Dendritic cell treated with granulocyte-macrophage colony-stimulating factor and Interleukin-4, amounts not matched to agents 40 ng/mL and 50 ng/mL, for 4 days (primary cell): ENCODE measurements at regions of chr7 and their contacts with region 1.

Region 1: GRCh38 chr7:92833024-92833765 is 3.2 kb downstream of the CDK6 start:
- H3K4me3 Mint-ChIP-seq: peak overlapping the region; percentile 92
- H3K27ac Mint-ChIP-seq: peak overlapping the region; percentile 84
- H3K4me1 Mint-ChIP-seq: peaks cover 34% of the 10 kb centered on the region
- H3K27me3 Mint-ChIP-seq: peaks cover 6% of the 10 kb centered on the region

Region 2: DNA sequence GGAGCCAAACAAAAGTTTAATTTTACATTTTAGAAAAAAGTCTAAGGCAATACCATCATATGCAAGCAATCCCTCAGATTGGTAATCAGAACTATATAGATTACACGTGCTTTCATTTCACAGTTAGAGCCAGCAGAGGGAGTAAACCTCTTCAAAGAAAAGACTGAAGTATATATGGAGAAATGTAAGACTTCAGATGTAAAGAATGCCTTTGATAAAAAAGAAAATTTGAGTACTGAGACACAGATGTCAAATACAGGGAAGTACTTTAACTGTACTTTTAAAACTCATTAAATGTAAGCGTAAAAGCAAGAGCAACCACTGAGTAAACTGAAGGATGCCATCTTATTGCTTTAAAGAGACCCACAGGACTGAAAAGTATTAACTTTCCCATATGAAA is 141.6 kb before region 1 on chr7:
- intact Hi-C with region 1: loop called (anchors 1 kb)
- H3K4me3 Mint-ChIP-seq: no peak overlapping the region
- H3K27ac Mint-ChIP-seq: no peak overlapping the region
- H3K4me1 Mint-ChIP-seq: peaks cover 13% of the 10 kb centered on the region
- H3K27me3 Mint-ChIP-seq: no peaks in the 10 kb centered on the region

Region 3: DNA sequence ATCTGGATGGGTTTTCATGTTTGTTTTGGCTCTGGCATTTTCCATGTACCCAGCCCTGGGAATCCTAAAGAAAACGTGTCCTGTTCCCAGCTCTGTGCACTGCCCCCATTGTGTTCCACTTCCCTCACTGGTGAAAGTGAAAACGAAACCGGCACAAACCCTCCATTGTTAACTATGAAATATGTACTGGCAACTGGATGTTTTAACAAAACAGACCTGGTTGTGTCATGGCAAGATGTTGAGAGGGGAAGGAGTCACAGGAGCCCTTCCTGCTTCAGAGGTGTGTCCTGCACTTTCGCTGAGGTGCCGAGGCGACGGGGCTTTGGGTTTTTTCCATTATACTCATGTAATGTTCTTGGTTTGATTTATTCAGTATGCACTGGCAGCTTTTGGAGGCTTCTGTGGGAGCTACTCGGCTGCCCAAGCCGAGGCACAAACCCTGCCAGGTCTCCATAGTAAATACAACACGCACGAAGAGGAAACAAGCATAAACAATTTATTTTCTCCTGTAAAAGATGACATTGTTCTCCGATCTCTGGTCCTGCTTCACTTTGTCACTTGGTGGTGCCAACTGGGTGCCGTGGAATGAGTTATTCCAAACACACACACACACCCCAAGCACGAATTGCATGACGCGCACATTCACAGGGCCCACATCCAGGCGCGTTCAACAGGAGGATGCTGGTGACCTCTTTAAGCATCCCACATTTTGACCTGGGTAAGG is 115.0 kb before region 1 on chr7:
- intact Hi-C with region 1: loop called (anchors 2 kb)
- H3K4me3 Mint-ChIP-seq: peak overlapping the region; percentile 83
- H3K27ac Mint-ChIP-seq: peak overlapping the region; percentile 96
- H3K4me1 Mint-ChIP-seq: peaks cover 22% of the 10 kb centered on the region
- H3K27me3 Mint-ChIP-seq: no peaks in the 10 kb centered on the region

Region 4: DNA sequence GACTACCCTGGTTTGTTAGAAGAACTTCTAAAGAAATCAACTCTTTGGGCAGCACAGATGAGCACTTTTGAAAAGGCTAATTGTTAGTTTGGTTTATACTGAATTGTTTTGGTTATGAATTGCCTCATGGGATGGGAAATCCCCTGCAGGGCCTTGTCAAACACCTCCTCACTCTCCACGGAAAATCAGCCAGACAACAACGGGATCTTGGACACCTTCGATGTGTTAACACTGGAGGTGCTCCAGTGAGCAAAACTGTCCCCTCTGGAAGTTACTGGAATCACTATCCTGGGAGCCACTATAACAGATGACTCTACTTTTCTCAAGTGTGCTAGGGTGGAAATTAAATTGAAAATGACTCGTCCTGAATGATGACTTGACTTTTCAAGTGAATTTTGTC is 35.5 kb before region 1 on chr7:
- intact Hi-C with region 1: loop called (anchors 5 kb)
- H3K4me3 Mint-ChIP-seq: no peak overlapping the region
- H3K27ac Mint-ChIP-seq: no peak overlapping the region
- H3K4me1 Mint-ChIP-seq: peaks cover 14% of the 10 kb centered on the region
- H3K27me3 Mint-ChIP-seq: no peaks in the 10 kb centered on the region

Region 5: DNA sequence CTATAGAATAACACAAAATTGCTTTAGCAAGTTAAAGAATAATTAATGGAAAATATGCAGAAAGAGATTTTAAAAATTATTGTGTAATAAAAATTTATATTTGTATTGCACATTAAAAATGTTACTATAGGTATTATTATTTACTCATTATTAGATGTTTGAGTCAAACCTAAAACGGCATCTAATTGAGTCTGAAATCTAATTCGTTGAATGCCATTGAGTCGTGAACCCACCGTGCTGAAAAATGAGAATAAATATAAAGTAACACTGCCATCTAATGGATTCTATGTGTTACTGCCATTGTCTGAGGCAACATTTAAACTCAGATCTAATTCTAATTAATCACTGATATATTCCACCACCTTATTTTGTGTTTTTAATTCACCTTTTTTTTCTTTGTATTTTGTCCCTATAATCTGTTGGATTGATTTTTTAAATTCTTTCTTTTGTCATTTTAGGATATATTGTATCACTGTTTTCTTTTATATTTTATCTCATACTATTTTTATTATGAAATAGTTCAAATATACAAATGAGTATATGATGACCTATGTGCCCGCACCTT is 222.4 kb after region 1 on chr7:
- intact Hi-C with region 1: loop called (anchors 2 kb)
- H3K4me3 Mint-ChIP-seq: no peak overlapping the region
- H3K27ac Mint-ChIP-seq: no peak overlapping the region
- H3K4me1 Mint-ChIP-seq: peaks cover 8% of the 10 kb centered on the region
- H3K27me3 Mint-ChIP-seq: no peaks in the 10 kb centered on the region